GM10248 (cell line): ENCODE measurements at regions of chr5 and their contacts with region 1.

Region 1: DNA sequence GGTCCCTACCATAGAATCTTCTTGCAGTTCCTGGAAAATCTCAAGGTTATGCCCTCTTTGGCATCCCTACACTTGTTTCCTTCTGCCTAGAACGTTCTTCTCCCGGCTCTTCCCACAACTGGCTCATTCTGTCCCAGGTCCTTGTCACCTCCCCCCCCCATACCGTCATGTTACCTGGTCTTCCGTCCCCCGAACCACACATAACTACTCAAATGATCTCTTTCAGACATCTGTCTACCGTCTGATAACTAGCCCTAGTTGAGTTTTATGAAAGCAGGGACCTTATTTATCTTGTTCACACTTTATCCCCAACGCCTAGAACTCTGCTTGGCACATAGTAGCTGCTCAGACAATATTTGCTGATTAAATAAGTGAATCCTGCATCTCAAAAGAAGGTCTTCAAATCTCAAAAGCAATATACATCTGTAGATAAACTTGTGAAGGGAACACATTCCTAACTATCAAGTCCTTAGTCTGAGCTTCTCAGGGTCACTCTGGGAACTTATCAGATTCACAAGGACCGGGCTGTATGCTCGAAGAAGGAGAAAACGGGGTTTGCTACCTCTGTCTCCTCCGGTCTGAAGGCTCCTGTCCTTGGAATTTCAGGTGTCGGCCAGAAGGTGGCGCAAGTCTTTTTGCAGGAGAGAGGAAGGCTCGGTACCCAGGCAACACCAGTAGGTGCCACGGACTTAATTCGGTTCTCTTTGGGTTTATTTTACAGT is 30.0 kb downstream of the LCP2 start:
- DNase-seq: peak; percentile 85
- CTCF ChIP-seq: peak; percentile 85

Region 2: DNA sequence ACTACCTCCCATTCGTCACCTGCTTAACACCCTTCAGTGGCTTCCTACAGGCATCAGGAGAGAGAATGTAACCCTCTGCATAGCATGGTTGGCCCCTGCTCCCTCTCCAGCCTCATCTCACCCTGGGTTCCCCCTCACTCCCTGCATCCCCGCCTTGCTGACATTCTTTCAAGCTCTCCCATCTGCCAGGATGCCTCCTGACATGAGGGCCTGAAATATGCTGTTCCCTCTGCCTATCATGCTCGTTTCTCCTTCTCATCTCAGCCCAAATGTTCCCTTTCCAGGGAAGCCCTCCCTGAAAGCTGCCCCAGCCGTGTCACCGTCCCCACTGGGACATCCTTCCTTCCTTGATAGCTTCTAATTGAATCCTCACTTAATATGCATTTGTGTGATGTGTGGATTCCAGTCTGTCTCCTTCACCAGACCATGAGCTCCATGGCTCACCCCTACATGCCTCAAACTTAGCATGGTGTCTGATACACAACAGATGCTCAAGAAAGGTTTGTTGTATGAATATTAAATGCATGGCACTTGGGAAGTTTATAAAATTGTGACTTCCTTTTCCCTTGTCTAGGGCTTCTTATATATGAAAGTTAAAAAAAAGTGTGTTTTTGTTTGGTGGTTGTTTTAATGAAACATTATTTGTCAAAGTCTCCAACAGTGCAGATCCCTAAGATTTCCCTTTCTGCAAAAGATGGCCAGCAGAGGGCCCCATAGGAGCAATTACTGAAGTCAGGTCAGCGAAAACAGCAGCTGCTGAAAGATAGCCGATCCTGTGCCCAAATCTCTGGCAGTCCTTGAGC is 42.1 kb before region 1 on chr5:
- CTCF ChIA-PET with region 1: interaction called, 27 read pairs
- POLR2A ChIA-PET with region 1: no interaction called
- DNase-seq: peak; percentile 71
- CTCF ChIP-seq: peak; percentile 72

Region 3: GRCh38 chr5:170278611-170279452 is 11.2 kb after region 1 on chr5:
- CTCF ChIA-PET with region 1: interaction called, 50 read pairs
- POLR2A ChIA-PET with region 1: no interaction called
- DNase-seq: peak; percentile 82
- CTCF ChIP-seq: no peak

Region 4: GRCh38 chr5:170293273-170293672 is 25.7 kb after region 1 on chr5:
- CTCF ChIA-PET with region 1: interaction called, 48 read pairs
- POLR2A ChIA-PET with region 1: no interaction called
- DNase-seq: peak; percentile 71
- CTCF ChIP-seq: peak; percentile 8

Region 5: DNA sequence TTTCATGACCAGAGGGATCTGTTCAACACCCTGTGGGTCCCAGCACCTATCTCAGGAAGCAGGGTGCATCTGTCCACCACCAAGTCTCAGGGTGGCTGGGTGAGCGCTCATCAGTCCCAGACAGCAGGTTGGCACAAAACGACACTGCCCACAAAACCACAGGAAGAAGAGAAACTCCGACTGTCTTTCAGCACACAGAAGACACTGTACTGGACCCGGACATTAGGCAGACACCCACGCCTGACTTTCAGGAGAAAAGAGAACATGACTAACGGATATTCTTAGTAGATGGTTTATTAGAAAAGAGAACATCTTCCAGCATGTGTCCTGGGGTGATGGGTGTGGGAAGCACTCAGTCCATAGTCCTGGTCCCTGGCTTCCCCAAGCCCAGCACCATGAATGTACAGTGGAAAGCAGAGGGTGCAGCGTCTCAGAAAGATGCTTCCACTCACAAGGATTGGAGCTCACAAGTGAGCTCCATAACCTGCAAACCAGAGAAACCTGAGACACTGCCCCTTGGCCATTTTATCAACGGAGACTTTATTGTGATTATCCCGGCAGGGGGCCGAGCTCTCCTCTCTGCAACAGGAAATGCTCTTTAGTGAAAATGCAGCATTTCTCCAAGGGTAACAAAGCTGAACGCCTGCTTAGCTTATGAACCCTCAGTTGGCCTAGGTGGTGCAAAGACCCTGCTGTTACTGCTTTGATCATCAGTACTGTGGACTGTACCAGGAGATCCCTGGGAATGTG is 65.7 kb after region 1 on chr5:
- CTCF ChIA-PET with region 1: interaction called, 79 read pairs
- POLR2A ChIA-PET with region 1: no interaction called
- DNase-seq: no peak
- CTCF ChIP-seq: no peak

Region 6: GRCh38 chr5:170348137-170348633 is 80.6 kb after region 1 on chr5:
- CTCF ChIA-PET with region 1: interaction called, 12 read pairs
- POLR2A ChIA-PET with region 1: no interaction called
- DNase-seq: no peak
- CTCF ChIP-seq: no peak

Region 7: DNA sequence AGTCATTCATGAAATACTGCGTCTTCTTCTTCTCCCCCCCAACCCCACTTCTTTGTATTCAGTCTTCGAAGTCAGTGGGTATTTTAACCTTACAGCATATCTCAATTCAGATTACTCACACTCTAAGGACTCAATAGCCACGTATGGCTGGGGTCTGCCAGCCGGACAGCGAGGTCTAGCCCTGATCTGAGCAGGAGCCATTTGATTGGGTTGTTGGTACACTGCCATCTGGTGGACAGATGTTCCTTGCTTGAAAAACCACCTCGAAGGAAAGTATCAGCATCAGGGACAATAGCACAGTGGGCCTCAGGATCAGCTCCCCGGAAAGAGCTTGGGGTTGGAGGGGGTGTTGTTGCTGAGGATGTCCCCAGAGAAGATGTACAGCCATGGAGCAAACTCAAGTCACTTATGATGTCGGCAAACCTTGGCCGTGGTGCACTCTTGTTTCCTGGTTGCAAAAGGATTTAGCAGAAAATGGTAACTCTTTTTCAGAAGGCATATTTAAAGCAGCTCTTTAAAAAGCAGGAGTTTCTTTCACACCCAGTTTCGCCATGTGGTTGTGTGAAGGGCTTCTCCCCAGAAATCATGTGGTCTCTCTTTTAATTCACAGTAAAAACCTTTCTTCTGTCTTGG is 153.3 kb after region 1 on chr5:
- CTCF ChIA-PET with region 1: interaction called, 11 read pairs
- POLR2A ChIA-PET with region 1: interaction called, 6 read pairs
- DNase-seq: peak; percentile 74
- CTCF ChIP-seq: peak; percentile 51